ENCODE measurements at regions of chr1 and their contacts with region 1.

Region 1: DNA sequence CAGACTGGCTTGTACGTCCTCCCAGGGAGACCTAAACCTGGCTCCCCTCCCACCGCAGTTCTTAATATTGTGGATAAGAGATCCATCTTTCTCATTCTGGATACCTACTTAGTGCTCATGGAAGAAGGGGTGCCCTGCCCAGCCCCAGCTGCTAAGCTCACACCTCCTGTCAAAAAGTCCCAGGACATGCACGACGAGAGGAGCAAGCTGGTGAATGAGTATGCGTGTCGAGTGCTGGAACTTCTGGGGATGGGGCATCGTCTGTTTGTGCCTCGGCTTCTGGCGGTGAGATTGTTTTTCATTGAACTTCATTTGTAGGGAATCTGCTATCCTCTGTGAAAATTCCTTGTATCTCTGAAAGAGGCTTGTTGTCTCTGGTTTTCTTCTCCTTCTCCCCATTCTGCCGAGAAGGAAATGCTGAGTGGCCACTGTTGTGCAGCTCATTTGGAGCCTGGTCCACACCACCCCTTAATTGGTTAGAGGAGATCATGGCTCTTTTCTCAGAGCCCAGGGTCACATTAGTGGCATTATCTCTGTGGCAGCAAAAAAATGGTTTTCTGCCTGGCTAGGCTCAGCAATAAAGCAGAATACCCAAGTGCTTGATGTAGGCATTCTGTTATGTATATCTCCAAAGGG is 199.4 kb upstream of the CACYBP start:
- DNase-seq: peak in 6 of 10 donors; percentile 12 to 84 (median 28)

Region 2: DNA sequence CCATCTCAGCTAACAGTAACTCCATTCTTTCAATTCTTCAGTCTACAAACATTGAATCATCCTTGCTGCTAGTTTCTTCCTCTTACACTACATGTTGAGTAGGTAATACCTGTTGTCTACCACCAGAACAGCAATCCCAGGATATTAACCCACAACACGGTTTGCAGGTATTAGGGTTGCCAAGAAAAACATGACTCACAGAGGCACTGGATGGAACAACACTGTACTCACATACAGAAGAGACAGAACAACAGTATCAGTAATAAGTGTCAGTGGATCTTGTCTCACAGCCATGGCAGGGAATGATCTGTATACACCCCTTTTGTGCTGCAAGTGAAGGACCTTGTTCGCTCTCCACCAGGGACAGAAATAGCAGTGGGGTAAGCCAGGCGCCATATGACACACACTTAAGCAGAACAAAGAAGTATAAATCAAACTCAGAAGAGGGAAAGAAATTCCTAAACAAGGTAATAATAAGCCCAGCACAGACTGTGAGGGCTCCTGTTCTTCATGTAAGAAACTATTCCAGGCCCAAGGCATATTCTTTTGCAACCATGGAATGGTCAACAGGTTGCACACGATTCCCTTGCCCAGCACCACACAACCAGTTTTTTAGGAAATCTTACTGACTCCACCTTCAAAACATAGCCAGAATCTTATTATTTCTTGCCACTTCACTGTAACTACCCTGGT is 140.4 kb before region 1 on chr1:
- intact Hi-C with region 1: no loop called
- DNase-seq: no peak

Region 3: DNA sequence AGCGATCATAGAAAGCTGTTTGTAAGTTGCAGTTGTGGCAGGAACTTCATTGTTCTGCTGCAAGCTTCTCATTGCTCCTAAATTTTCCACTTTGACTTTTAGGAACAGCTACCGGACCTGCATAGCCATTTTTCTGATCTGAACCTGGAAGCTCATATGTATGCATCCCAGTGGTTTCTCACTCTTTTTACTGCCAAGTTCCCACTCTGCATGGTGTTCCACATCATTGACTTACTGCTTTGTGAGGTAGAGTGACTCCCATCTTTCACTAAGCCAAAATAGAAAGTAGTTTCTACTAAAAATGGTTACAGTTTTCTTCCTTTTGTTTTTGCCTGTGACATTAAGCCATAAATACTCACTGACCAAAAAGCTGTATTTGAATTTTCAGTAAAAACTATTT is 98.3 kb before region 1 on chr1:
- intact Hi-C with region 1: no loop called
- DNase-seq: no peak

Region 4: GRCh38 chr1:174999216-174999925 is 199.0 kb after region 1 on chr1:
- intact Hi-C with region 1: loop called (anchors 1 kb)
- DNase-seq: peak; percentile 94 to 100 (median 97)

Measured in posterior cingulate gyrus (tissue), 11 donors.